ENCODE measurements at regions of chr1 and their contacts with region 1.

Region 1: DNA sequence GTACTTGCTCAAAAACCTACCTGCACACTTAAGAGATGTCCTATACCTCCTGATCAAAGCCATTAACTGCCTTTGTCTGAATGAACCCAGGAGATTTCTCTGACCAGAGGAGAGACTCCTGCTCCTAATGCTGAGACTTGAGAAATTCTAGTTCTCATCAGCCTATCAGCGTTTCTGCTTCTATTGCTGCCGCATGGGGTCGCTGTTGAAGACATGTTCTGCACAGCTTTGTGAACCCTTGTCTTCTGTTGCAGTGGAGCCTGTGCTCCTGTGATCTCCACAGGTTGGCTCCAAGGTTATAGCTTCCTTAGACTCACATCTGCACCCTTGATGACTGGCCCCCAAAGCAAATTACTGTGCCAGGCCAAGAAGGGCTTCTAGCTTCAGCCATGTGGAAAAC is 40.2 kb downstream of the EDN2 start:
- DNase-seq: no peak
- H3K4me3 ChIP-seq: no peak overlapping the region
- H3K27ac ChIP-seq: no peak overlapping the region
- H3K4me1 ChIP-seq: peaks cover 21 to 39% of the 10 kb centered on the region in 2 experiments
- H3K27me3 ChIP-seq: no peaks in the 10 kb centered on the region
- CTCF ChIP-seq: peak; percentile 41
- EP300 ChIP-seq: no peak
- RAD21 ChIP-seq: no peak

Region 2: DNA sequence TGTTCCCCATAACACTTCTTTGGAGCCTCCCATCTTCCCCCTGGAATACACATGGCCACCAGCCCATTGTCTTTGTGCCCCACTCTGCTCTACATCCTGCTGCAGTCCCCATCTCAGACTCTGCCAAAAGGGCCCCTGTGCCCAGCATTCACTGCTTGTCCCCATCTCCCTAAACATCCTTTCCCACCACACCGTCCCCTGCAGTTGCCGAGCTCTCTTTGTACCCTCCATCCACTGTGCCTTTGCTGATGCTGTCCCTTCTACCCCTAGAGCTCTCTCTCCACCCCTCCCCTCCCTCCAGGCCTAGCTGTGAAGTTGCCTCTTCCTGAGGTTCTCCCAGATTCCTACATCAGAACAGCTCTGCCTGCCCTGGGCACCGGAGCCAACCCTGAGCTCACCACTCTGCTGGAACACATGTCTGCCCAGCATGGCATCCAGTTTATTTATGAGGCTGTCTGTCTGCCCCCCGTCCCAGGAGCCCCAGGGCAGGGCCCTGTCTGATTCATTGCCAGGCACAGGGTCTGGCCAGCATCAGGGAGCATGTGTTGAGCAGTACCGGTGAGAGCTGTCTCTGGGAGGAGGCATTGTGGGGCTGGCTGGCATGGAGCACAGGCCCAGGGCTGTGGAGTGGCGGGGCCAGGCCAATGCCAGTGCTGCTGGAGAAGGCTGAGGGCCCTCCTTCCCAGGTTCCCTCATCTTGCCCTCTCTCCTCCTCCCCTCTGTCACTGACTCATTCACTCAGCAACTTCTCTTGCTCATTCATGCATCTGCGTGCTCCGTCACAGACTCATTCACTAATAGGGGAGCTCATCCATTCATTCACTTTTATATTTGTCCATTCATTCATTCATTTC is 11.5 kb after region 1 on chr1:
- CTCF ChIA-PET with region 1: interaction called, 24 read pairs
- POLR2A ChIA-PET with region 1: interaction called, 3 read pairs
- DNase-seq: peak; percentile 92
- H3K4me3 ChIP-seq: no peak overlapping the region
- H3K27ac ChIP-seq: peak overlapping the region; percentile 76 to 91
- H3K4me1 ChIP-seq: peaks cover 24 to 64% of the 10 kb centered on the region in 2 experiments
- H3K27me3 ChIP-seq: no peaks in the 10 kb centered on the region
- CTCF ChIP-seq: no peak
- EP300 ChIP-seq: peak; percentile 91 to 97
- RAD21 ChIP-seq: no peak; the same call in 1 of the 2 replicates